Calu3 (cell line): ENCODE measurements at regions of chr16 and their contacts with region 1.

Region 1: GRCh38 chr16:78503602-78504001 is 404.1 kb downstream of the WWOX start:
- DNase-seq: peak; percentile 53
- H3K4me3 Mint-ChIP-seq: no peak overlapping the region
- H3K27ac Mint-ChIP-seq: no peak overlapping the region
- H3K4me1 Mint-ChIP-seq: peaks cover 6% of the 10 kb centered on the region
- H3K27me3 Mint-ChIP-seq: no peaks in the 10 kb centered on the region
- CTCF ChIP-seq: peak; percentile 68

Region 2: DNA sequence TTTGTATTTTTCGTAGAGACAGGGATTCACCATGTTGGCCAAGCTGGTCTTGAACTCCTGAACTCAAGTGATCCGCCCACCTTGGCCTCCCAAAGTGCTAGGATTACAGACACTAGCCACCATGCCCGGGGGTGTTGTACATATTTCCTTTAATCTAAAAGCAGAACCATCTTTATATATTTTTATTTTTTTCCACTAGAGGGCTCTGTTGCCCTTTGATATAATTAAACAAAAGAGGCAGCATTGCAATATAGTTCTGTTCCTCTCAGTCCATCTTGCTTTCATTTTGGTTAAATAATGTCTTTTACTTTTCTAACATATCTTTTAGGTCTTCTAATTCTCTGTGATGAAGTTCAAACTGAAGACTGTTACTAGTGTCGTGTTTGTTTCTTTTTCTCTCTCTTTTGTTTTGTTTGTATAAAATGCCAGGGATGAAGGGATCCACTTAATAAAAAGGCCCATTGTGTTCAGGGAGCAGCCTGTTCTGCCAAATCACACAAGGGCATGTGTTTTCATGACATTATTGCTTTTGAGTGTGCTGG is 380.8 kb before region 1 on chr16:
- CTCF ChIA-PET with region 1: no interaction called
- intact Hi-C with region 1: loop called (anchors 10 kb)
- DNase-seq: peak; percentile 32
- H3K4me3 Mint-ChIP-seq: peak overlapping the region; percentile 39
- H3K27ac Mint-ChIP-seq: peak overlapping the region; percentile 46
- H3K4me1 Mint-ChIP-seq: peaks cover 8% of the 10 kb centered on the region
- H3K27me3 Mint-ChIP-seq: no peaks in the 10 kb centered on the region
- CTCF ChIP-seq: peak; percentile 60

Region 3: GRCh38 chr16:79047229-79047983 is 543.8 kb after region 1 on chr16:
- CTCF ChIA-PET with region 1: no interaction called
- intact Hi-C with region 1: loop called (anchors 2 kb)
- DNase-seq: peak; percentile 22
- H3K4me3 Mint-ChIP-seq: no peak overlapping the region
- H3K27ac Mint-ChIP-seq: no peak overlapping the region
- H3K4me1 Mint-ChIP-seq: no peaks in the 10 kb centered on the region
- H3K27me3 Mint-ChIP-seq: no peaks in the 10 kb centered on the region
- CTCF ChIP-seq: peak; percentile 27

Region 4: DNA sequence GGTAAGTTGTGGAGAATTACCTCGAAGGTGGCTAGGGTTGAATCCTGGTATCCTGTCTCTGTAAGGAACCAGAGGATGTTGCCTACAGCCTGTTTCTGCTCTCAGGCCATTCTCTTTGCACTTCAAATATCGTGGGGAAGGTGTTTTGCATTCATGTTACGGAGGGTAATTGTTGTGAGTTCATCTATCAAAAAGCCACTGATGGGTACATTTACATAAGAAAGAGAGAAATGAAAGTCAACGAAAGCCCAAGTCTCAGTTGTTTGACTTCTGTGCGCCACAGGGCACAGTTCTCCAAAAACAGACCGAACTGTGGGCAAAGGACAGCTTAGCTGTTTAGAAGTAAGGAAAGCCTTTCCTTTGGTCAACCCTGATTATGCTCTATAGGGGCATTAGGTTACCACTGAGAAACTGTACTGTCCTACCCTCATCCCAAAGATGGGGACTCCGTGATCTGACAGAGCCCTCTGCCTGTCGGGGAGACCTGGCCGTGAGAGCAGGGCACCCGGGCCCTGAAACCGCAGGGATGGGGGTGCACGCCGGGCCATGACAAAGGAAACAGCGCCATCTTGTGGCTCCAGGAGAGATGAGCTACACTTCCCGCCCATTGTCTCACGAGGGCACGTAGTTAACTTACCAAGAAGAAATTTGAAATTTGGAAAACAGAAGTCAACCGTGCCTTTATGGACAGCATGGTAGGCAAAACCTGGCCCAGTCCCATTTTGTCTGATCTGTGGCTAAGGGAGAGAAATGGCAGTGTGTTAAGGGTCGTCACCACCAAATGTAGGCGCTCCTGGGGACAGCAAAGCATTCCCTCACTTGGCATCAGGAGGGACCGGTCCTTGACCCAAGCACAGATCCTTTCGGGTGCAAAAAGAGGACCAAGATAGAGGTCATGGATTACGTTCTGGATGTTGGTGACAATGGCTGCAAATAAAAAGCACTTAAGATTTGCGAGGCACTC is 1962.7 kb after region 1 on chr16:
- CTCF ChIA-PET with region 1: no interaction called
- intact Hi-C with region 1: loop called (anchors 5 kb)
- DNase-seq: peak; percentile 73
- H3K4me3 Mint-ChIP-seq: no peak overlapping the region
- H3K27ac Mint-ChIP-seq: no peak overlapping the region
- H3K4me1 Mint-ChIP-seq: peaks cover 18% of the 10 kb centered on the region
- H3K27me3 Mint-ChIP-seq: no peaks in the 10 kb centered on the region
- CTCF ChIP-seq: peak; percentile 92